PC-9 (cell line): ENCODE measurements at regions of chr17 and their contacts with region 1.

Region 1: DNA sequence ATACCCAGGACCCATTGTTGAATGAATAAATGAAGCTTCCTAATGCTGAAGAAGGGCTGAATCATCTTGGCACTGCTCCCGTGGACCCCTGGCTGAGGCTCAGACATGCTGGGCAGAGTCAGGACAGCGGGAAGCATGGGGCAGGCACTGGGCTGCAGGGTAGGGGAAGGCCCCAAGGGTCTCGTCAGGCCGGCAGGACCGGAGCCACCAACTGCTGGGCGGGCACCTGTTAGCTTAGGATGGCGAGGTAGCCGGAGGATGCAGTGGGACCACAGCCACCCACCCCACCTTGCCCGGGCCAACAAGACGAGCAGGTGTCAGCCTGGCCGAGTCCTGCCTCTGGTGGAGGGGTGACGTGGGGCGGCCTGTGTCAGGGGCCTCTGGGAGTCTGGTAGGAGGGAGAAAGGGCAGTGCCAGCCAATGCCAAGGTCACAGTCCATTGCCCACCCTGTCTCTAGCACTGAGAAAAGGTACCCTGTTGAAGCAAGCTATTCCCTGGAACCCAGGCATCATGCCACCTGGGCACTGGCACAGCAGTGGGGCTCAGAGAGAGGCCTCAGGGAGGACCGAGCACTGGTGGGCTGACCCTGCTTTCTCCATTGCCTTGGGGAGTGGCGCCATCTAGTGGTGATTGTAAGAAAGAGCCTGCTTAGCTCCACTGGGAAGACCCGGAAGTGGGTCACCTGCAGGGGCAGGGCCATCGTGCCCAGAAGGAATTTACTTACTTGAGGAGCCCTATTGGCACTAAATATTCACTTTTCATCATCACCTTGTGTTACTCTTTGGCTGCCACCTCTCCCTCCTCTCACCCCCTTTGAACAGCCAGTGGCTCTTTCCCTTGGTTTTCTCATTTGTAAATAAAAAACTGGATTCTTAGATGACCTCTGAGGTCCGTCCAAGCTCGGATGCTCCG is 3.0 kb upstream of the DLX3 start:
- DNase-seq: peak; percentile 77 to 80
- H3K4me3 ChIP-seq: no peak overlapping the region
- H3K27ac ChIP-seq: no peak overlapping the region
- H3K4me1 ChIP-seq: peaks cover 27% of the 10 kb centered on the region
- H3K27me3 ChIP-seq: peaks cover 7% of the 10 kb centered on the region; the same call in 1 of the 2 replicates
- CTCF ChIP-seq: peak; percentile 97

Region 2: GRCh38 chr17:49414622-49415350 is 583.3 kb before region 1 on chr17 and contains the start of gene PHB1:
- CTCF ChIA-PET with region 1: no interaction called
- POLR2A ChIA-PET with region 1: no interaction called
- intact Hi-C with region 1: loop called (anchors 10 kb)
- DNase-seq: peak; percentile 94 to 98
- H3K4me3 ChIP-seq: peak within 1 kb of the TSS; percentile 72
- H3K27ac ChIP-seq: no peak within 1 kb of the TSS
- H3K4me1 ChIP-seq: peaks cover 14% of the 10 kb centered on the region
- H3K27me3 ChIP-seq: no peaks in the 10 kb centered on the region
- CTCF ChIP-seq: no peak
- total RNA-seq, gene PHB1: 197 and 244 TPM in 2 replicates

Region 3: DNA sequence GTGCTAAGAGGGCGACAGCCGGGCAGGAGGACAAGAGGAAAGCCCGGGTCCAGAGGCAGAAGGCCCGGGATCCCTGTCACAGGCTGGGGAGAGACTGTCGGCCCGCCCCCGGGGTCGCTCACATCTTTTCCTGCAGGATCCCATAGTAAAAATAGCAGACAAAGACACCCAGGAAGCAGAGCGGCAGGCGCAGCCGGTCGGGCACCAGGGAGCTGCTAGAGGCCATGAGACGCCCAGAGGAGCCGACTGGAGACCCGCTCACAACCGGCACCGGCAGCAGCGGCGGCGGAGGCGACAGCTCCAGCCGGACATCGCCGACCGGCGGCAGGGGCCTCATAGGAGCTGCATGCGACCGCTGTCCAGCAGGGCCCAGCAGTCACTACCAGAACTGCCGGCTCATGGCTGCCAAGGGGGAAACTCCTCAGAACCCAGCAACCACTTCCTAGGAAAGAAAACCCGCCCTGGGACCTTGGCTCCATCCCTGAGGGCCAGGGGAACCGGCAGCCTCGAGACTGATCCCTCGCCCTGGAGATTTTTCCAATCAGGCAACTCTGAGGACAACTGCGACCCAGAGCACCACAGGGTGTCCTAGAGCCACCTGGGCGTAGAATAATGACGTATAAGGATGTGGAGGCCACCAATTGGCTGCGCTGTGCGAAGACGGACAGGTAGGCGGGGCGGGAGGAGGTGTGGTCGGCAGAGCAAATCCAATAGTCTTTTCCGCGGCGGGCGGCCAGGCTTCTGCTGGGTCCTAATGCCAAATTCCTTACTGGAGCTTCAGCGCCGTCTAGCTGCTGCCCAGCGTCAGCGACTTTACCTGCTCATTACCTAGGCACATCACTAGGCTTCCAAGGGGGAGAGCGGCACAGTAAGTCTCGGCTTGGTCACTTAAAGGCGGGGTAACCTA is 290.2 kb before region 1 on chr17 and contains the start of gene SLC35B1:
- CTCF ChIA-PET with region 1: no interaction called
- POLR2A ChIA-PET with region 1: no interaction called
- intact Hi-C with region 1: loop called (anchors 2 kb)
- DNase-seq: peak; percentile 97 to 98
- H3K4me3 ChIP-seq: peak within 1 kb of the TSS; percentile 92
- H3K27ac ChIP-seq: peak within 1 kb of the TSS; percentile 86
- H3K4me1 ChIP-seq: peaks cover 17% of the 10 kb centered on the region
- H3K27me3 ChIP-seq: no peaks in the 10 kb centered on the region
- CTCF ChIP-seq: peak; percentile 83
- total RNA-seq, gene SLC35B1: 43.5 and 44.7 TPM in 2 replicates

Region 4: DNA sequence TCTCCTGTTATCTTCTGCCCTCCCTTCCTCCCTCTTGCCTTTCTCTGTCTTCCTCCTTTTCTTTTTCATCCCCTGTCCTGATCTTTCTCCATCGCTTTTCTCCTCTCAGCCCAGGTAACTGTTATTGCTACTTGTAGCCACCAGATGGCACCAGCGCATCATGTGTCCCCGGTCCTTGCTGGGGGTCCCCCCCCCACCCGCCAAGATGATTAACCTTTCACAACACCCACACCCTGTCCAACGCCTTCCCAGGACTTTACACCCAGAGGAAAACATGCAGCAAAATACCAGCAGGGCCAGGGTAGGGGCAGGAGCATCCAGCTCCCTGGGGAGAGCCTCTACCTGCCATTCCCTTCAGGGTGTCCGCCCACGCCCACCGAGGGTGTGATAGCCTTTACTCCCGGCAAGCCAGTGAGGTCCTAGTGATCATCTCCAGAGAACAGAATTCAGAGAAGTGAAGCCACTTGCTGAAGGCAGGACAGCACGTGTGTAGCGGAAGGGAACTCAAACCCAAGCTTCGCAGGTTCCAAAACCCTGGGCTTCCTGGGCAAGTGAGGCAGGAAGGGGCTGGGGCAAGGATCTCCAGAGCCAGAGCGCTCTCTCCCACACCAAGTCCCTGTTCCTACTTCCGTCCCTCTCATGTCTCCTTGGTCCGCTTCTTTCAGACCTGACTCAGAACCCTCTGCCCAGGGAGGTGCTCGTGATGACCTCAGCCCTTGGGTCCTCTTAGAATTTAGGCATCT is 136.7 kb before region 1 on chr17:
- CTCF ChIA-PET with region 1: interaction called, 29 read pairs
- POLR2A ChIA-PET with region 1: no interaction called
- intact Hi-C with region 1: loop called (anchors 1 kb)
- DNase-seq: peak; percentile 65 to 68
- H3K4me3 ChIP-seq: no peak overlapping the region
- H3K27ac ChIP-seq: no peak overlapping the region
- H3K4me1 ChIP-seq: peaks cover 4% of the 10 kb centered on the region
- H3K27me3 ChIP-seq: no peaks in the 10 kb centered on the region
- CTCF ChIP-seq: peak; percentile 99

Region 5: GRCh38 chr17:49887086-49888028 is 110.7 kb before region 1 on chr17:
- CTCF ChIA-PET with region 1: interaction called, 4 read pairs
- POLR2A ChIA-PET with region 1: interaction called, 50 read pairs
- intact Hi-C with region 1: no loop called
- DNase-seq: peak; percentile 97 to 100
- H3K4me3 ChIP-seq: peak overlapping the region; percentile 29; the same call in 1 of the 2 replicates
- H3K27ac ChIP-seq: peak overlapping the region; percentile 88
- H3K4me1 ChIP-seq: peaks cover 67% of the 10 kb centered on the region
- H3K27me3 ChIP-seq: no peaks in the 10 kb centered on the region
- CTCF ChIP-seq: no peak

Region 6: DNA sequence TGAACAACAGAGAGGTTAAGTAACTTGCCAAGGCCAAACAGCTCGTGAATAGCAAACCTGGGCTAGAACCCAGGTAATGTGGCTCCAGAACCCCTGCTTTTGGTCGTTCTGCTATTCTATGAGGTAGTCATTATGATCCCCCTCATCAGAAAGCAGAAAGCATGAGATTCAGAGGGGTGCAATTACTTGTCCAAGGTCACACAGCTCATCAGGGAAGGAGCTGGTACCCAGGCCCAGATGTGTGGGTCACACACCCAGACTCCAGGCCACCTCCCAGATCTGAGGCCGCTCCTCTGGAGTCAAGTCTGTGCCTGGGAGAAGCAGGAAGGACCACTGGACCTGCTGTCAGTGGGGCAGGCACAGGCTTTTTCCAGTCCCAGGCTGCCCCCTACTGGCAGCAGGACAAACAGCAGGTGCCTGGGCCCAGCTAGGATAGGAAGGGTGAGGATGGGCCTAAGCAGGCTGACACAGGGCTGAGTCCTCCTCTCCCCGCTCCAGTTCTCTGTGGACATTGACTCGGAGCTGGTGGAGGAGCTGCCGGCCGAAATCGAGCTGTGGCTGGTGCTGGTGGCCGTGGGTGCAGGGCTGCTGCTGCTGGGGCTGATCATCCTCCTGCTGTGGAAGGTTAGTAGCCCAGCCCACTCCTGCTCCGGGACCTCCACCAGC is 89.3 kb after region 1 on chr17:
- CTCF ChIA-PET with region 1: no interaction called
- POLR2A ChIA-PET with region 1: no interaction called
- intact Hi-C with region 1: loop called (anchors 1 kb)
- DNase-seq: peak; percentile 68 to 72
- H3K4me3 ChIP-seq: no peak overlapping the region
- H3K27ac ChIP-seq: no peak overlapping the region
- H3K4me1 ChIP-seq: no peaks in the 10 kb centered on the region
- H3K27me3 ChIP-seq: no peaks in the 10 kb centered on the region
- CTCF ChIP-seq: peak; percentile 97